GM18951 (cell line): ENCODE measurements at regions of chr7 and their contacts with region 1.

Region 1: DNA sequence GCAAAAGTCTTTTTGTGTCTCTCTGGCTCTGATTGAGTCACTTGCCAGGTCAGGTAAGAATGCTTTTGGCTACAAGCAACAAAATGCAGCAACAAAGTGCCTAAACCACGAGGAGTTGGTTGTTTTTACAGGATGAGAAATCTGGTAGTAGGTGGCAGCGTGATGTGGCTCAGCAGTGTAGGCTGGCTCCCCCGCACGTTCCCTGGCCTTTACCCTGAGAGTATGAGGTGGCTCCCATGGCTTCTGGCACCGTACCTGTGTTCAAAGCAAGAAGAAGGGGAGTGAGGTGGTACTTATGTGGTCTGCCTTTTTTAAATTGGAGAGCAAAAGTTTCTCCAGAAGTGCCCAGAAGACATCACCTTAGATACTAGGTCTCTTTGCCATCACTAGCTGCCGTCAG is 11.7 kb downstream of the PRKRIP1 start:
- POLR2A ChIP-seq: no peak

Region 2: DNA sequence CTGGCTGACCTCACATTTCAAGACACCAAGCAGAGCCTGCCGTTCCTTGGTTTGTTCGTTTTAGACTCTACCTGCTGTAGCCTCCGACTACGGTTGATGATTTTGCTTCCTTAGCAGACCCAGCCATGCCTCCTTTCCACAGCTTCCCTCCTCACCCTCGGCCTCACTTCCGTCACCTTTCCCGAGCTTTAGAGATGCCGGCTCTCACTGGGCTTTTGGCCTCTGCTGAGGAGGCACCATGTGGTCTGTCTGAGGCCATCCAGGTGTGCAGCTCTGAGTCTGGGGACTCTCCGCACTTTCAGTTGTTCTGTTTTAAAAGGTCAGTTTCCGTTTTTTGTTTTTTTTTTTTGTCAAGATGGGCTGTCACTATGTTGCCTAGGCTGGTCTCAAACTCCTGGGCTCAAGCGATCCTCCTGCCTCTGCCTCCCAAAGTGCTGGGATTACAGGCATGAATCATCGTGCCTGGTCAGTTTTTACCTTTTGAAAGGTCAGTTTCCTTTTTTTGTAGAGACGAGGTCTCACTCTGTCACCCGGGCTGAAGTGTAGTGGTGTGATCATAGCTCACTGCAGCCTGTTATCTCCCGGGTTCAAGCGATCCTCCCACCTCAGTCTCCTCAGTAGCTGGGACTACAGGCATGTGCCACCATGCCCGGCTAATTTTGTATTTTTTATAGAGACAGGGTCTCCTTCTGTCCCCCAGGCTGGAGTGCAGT is 37.2 kb after region 1 on chr7:
- in situ Hi-C with region 1: loop called (anchors 5 kb)
- POLR2A ChIP-seq: peak; percentile 47